ENCODE measurements at regions of chr7 and their contacts with region 1.

Region 1: GRCh38 chr7:135509903-135510602 is at the start of gene CNOT4:
- DNase-seq: peak; percentile 97
- ATAC-seq: peak; percentile 99
- total RNA-seq, gene CNOT4: 26.6 TPM

Region 2: DNA sequence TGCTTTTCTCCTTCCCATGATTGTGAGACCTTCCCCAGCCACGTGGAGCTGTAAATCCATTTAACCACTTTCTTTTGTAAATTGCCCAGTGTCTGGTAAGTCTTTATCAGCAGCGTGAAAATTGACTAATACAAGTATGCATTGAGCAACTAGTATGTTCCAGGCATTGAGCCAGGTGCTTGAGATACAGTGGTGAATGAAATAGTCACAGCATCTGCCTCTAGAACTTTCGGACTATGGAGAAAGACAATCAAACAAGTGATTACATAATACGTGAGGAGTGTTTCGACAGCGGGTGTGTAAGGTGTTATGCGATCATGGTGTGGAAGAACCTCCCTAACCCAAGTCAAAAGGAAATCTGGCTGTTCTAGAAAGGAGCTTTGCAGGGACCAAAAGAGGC is 26.1 kb after region 1 on chr7:
- intact Hi-C with region 1: no loop called
- DNase-seq: no peak
- ATAC-seq: no peak

Region 3: GRCh38 chr7:135558337-135558767 is 48.3 kb after region 1 on chr7:
- intact Hi-C with region 1: loop called (anchors 1 kb)
- DNase-seq: peak; percentile 67
- ATAC-seq: peak; percentile 74

Measured in Right ventricle myocardium inferior (tissue), 1 donor.